ENCODE measurements at regions of chrX and their contacts with region 1.

Region 1: DNA sequence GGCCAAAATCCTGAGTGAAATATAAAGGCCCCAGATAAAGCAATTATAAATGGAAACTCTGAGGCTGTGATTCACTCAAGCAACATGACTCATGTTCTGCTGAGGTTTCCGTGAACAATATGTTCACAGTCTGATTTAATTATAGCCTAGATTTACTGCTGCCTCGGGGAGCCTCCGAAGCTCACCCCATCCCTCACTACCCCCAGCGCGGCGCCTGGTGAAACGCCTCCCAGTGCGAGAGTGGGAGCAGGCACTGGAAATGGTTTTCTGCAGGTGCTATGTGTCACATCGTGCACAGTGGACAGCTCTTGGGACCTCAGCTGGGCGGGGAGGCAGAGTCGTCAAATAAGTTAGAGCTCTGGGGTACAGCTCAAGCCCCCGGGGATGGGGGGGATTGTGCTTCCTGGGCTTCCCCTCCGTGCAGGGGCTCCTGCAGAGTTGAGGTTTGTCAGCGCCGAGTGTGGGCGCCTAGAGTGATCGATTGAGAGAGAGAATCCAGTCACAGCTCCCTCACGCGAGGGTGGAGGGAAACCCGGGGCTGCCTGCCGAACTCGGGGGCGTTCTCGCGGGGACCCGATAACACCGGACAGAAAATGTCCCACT is 110.6 kb downstream of the PHKA2 start:
- DNase-seq: peak; percentile 46
- H3K4me3 ChIP-seq: no peak overlapping the region
- H3K27ac ChIP-seq: peak overlapping the region; percentile 57
- H3K4me1 ChIP-seq: no peaks in the 10 kb centered on the region
- H3K27me3 ChIP-seq: no peaks in the 10 kb centered on the region
- CTCF ChIP-seq: no peak
- POLR2A ChIP-seq: no peak

Region 2: GRCh38 chrX:18793601-18794089 is 79.6 kb before region 1 on chrX:
- CTCF ChIA-PET with region 1: no interaction called
- POLR2A ChIA-PET with region 1: no interaction called
- dilution Hi-C with region 1: no loop called
- intact Hi-C with region 1: loop called (anchors 5 kb)
- DNase-seq: peak; percentile 46
- H3K4me3 ChIP-seq: no peak overlapping the region
- H3K27ac ChIP-seq: peak overlapping the region; percentile 39
- H3K4me1 ChIP-seq: peaks cover 10% of the 10 kb centered on the region
- H3K27me3 ChIP-seq: no peaks in the 10 kb centered on the region
- CTCF ChIP-seq: no peak
- POLR2A ChIP-seq: no peak

Region 3: GRCh38 chrX:19040373-19040772 is 167.1 kb after region 1 on chrX:
- CTCF ChIA-PET with region 1: no interaction called
- POLR2A ChIA-PET with region 1: no interaction called
- dilution Hi-C with region 1: no loop called
- intact Hi-C with region 1: no loop called
- DNase-seq: peak; percentile 1
- H3K4me3 ChIP-seq: no peak overlapping the region
- H3K27ac ChIP-seq: no peak overlapping the region
- H3K4me1 ChIP-seq: no peaks in the 10 kb centered on the region
- H3K27me3 ChIP-seq: no peaks in the 10 kb centered on the region
- CTCF ChIP-seq: no peak
- POLR2A ChIP-seq: no peak

Measured in endothelial cell of umbilical vein (primary cell).